GM18951 (cell line): ENCODE measurements at regions of chr6 and their contacts with region 1.

Region 1: DNA sequence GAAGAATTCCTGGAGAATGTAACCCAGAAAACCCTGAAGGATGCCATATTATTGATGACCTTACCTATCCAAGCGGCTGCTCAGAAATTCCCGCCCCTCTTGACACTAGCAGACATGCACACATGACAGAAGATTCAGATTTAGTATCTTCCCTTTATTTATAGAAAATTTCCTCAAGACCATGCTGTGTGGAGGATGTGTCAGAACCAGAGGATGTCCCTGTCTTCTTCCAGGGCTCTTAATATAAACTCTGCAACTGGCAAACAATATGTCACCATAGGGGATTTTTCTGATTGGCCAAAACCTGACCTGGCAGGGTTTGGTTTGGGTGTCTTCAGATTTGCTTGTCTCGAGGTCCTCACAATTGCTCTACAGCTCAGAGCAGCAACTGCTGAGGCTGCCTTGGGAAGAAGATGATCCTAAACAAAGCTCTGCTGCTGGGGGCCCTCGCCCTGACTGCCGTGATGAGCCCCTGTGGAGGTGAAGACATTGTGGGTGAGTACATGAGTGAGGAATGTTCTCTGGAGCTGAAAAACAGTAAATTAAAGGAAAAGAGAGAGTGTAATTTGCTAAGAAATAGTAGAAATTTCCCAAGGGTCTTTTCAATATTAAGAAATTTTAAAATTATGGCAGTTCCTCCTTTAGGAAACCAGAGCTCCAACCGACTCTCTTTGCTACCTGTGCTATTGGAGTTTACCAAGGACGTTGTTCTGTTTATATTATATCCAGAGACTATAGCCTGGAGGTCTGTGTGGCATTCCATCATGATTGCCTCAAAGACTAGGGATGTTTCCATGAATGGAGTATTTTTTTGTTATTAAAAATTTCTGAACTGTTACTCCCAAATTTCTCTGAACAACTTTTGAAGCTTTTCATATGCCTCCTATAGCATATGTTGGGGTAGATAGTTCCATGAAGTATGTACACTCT is at the start of gene HLA-DQA2:
- POLR2A ChIP-seq: peak; percentile 41

Region 2: DNA sequence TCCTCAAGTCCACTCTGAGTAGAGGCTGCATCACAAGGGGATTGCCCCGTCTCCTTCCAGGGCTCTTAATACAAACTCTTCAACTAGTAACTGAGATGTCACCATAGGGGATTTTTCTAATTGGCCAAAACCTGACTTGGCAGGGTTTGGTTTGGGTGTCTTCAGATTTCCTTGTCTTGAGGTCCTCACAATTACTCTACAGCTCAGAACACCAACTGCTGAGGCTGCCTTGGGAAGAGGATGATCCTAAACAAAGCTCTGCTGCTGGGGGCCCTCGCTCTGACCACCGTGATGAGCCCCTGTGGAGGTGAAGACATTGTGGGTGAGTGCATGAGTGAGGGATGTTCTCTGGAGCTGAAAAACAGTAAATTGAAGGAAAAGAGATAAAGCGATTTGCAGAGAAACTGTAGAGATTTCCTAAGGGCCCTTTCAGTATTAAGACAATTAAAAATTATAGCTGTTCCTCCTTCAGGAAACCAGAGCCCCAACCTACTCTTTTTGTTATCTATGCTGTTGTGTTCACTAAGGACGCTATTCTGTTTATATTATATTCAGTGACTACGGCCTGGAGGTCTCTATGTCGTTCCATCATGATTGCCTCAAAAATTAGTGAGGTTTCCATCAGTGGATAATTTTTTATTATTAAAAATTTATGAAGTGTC is 103.9 kb before region 1 on chr6 and contains the start of gene HLA-DQA1:
- in situ Hi-C with region 1: loop called (anchors 5 kb)
- POLR2A ChIP-seq: peak; percentile 67

Region 3: DNA sequence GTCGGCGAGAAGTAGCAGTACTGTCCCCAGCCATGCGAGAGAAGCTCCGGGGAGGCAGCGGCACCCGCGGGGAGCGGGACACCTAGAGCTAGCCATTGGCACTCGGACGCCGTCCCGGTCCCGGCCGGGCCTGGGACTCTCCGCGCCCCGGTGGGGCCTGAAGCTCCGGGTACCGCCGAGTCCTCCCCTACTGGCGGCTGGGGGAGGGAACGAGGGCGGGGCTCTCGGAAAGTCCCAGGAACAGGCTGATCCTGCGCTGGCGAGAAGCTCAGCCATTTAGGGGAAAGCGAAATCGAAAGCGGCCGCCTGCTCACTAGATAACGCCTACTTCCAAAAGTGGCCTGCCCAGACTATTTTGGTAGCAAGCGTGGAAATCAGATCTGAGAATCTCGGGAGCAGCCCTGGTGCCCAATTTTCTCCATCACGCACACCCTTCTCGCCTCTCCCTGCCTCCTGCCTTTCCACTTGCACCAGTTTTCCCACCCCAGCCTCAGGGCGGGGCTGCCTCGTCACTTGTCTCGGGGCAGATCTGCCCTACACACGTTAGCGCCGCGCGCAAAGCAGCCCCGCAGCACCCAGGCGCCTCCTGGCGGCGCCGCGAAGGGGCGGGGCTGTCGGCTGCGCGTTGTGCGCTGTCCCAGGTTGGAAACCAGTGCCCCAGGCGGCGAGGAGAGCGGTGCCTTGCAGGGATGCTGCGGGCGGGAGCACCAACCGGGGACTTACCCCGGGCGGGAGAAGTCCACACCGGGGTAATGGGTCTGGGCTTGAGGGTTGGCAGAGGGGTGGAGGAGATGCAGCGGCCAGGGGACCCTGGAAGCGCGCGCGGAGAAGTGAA is 112.5 kb after region 1 on chr6 and contains the starts of genes PSMB9 and TAP1:
- in situ Hi-C with region 1: no loop called
- POLR2A ChIP-seq: peak; percentile 95

Region 4: GRCh38 chr6:32962213-32962826 is 221.0 kb after region 1 on chr6:
- in situ Hi-C with region 1: no loop called
- POLR2A ChIP-seq: no peak

Region 5: DNA sequence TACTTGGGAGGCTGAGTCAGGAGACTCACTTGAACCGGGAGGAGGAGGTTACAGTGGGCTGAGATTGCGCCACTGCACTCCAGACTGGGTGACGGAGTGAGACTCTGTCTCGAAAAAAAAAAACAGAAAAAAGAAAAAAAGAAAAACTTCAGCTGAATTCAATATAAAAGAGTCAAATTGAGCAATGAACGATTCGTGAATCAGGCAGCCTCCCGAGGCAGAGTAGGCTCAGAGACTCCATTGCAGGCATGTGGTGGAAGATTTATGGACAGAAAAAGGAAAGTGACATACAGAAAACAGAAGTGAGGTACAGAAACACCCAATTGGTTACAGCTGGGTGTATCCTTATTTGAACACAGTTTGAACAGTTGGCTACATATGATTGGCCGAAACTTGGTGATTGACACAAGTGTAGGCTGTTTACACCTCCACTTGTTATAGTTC is 390.8 kb after region 1 on chr6:
- in situ Hi-C with region 1: no loop called
- POLR2A ChIP-seq: no peak